Panc1 (cell line): ENCODE measurements at regions of chr10 and their contacts with region 1.

Region 1: GRCh38 chr10:71285180-71285545 is 33.9 kb upstream of the SLC29A3 start:
- DNase-seq: peak; percentile 24
- ATAC-seq: peak; percentile 87
- H3K4me3 ChIP-seq: no peak overlapping the region
- H3K27ac ChIP-seq: no peak overlapping the region
- H3K4me1 ChIP-seq: no peaks in the 10 kb centered on the region
- H3K27me3 ChIP-seq: no peaks in the 10 kb centered on the region
- CTCF ChIP-seq: peak; percentile 95

Region 2: DNA sequence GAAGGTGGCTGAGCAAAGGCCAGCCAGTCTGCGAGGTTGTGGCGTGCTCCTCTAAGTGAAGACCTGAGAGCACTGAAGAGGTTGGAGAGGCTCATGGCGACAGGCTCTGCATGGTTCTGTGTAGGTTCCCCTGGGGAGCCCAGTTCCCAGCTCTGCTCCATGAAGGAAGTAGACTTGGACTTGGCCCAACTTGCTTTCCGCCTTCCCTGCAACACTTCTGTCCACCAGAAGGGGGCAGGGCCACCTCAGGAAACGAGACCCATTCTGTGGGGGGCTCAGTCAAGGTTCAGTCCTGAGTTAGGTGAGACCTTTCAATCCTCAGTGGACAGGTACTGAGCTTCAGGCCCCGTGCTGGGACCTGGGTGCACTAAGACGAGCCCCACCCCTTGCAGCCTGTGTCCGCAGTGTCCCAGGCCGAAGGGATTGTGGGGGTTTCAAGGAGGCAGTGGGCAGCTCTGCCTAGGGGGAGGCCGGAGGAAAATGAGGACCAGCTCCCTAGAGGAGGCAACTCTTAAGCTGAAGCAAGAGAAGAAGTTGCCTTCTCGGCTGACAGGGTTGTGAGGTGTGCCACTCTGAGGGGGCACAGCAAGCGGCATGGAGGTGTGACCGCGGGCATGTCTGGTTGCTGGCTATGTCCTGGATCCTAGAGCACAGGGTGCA is 381.8 kb before region 1 on chr10:
- CTCF ChIA-PET with region 1: no interaction called
- POLR2A ChIA-PET with region 1: no interaction called
- in situ Hi-C with region 1: no loop called
- intact Hi-C with region 1: loop called (anchors 2 kb)
- DNase-seq: no peak
- ATAC-seq: peak; percentile 52
- H3K4me3 ChIP-seq: no peak overlapping the region
- H3K27ac ChIP-seq: no peak overlapping the region
- H3K4me1 ChIP-seq: no peaks in the 10 kb centered on the region
- H3K27me3 ChIP-seq: peaks cover 5% of the 10 kb centered on the region; the same call in 1 of the 2 replicates
- CTCF ChIP-seq: peak; percentile 96

Region 3: DNA sequence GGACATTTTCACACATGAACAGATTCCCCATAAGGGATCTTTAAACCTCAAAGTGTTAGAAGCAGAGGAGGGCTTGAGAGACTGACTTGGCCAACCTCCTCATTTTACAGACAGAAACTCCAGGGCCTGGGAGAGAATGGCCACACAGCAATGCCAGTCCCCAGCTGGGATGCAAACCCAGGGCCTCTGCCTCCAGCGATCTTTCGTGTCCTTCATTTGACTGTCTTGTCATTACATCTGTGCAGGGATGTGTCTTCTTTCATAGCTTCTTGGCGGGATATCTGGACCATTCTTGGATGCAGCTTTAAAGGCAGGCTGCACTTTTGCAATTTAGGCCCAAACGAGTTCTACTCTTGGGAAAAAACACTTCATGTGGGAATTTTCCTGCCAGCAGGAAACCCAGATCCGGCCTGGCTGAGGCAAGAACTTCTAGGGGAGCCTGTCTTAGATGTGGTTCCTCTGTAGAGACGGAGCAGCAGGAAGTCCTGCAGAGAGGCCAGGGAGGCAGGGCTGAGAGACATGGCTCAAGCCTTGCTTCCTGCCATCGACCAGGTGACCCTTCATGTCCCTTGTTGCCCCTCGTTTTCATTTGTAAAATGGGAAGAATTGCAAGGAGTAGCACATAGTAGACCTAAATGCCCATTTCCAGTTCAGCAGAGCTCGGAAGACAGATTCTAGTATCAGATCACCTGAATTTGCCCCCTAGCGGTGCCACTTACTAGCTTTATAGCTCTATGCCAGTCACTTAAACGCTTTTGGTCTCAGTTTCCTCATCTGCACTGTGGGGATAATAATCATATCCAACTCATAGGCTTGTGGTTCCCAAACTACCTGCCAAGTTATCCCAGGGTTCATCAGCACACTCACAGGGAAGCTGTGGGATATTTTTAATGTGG is 10.0 kb before region 1 on chr10:
- CTCF ChIA-PET with region 1: interaction called, 10 read pairs
- POLR2A ChIA-PET with region 1: interaction called, 3 read pairs
- in situ Hi-C with region 1: no loop called
- intact Hi-C with region 1: no loop called
- DNase-seq: no peak
- ATAC-seq: no peak
- H3K4me3 ChIP-seq: no peak overlapping the region
- H3K27ac ChIP-seq: no peak overlapping the region
- H3K4me1 ChIP-seq: peaks cover 3% of the 10 kb centered on the region; the same call in 1 of the 2 replicates
- H3K27me3 ChIP-seq: no peaks in the 10 kb centered on the region
- CTCF ChIP-seq: no peak; the same call in 1 of the 2 replicates

Region 4: GRCh38 chr10:71408436-71409225 is 123.5 kb after region 1 on chr10:
- CTCF ChIA-PET with region 1: no interaction called
- POLR2A ChIA-PET with region 1: no interaction called
- in situ Hi-C with region 1: no loop called
- intact Hi-C with region 1: no loop called
- DNase-seq: no peak
- ATAC-seq: no peak
- H3K4me3 ChIP-seq: no peak overlapping the region
- H3K27ac ChIP-seq: no peak overlapping the region
- H3K4me1 ChIP-seq: no peaks in the 10 kb centered on the region
- H3K27me3 ChIP-seq: no peaks in the 10 kb centered on the region; the same call in 1 of the 2 replicates
- CTCF ChIP-seq: no peak